Activated CD4-positive, alpha-beta memory T cell treated with anti-CD3 and anti-CD28 coated beads, Interleukin-2, amount 10 ng/mL, durations not matched to agents 7 days and 5 days (primary cell): ENCODE measurements at regions of chr10 and their contacts with region 1.

Region 1: GRCh38 chr10:1048732-1049424 is at the start of gene IDI1:
- DNase-seq: peak; percentile 98
- H3K4me3 Mint-ChIP-seq: peak within 1 kb of the TSS; percentile 95
- H3K27ac Mint-ChIP-seq: peak within 1 kb of the TSS; percentile 94
- H3K4me1 Mint-ChIP-seq: peaks cover 69% of the 10 kb centered on the region
- H3K27me3 Mint-ChIP-seq: no peaks in the 10 kb centered on the region
- total RNA-seq, gene IDI1: 96.0 to 96.5 TPM

Region 2: DNA sequence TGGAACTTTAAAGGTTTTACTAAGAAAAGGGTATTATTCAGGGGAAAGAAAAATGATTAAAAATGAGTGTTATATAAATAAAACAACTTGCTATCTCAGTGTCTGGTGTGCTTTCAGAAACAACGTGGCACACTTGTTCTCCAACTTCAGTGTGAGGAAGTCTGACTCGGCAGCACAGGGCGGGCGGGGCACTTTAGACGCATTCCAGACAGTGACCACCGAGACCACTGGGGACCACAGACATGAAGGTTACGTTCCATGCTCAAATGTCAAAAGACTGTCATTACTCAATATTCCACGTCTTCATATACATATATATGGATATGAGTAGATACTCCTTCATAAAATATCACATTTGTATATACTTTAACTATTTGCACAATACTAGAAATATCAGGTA is 204.3 kb before region 1 on chr10:
- CTCF ChIA-PET with region 1: no interaction called
- POLR2A ChIA-PET with region 1: no interaction called
- DNase-seq: no peak
- H3K4me3 Mint-ChIP-seq: no peak overlapping the region
- H3K27ac Mint-ChIP-seq: no peak overlapping the region
- H3K4me1 Mint-ChIP-seq: peaks cover 35% of the 10 kb centered on the region
- H3K27me3 Mint-ChIP-seq: no peaks in the 10 kb centered on the region

Region 3: GRCh38 chr10:905503-905902 is 143.4 kb before region 1 on chr10:
- CTCF ChIA-PET with region 1: no interaction called
- POLR2A ChIA-PET with region 1: no interaction called
- DNase-seq: no peak
- H3K4me3 Mint-ChIP-seq: no peak overlapping the region
- H3K27ac Mint-ChIP-seq: no peak overlapping the region
- H3K4me1 Mint-ChIP-seq: peaks cover 23% of the 10 kb centered on the region
- H3K27me3 Mint-ChIP-seq: no peaks in the 10 kb centered on the region

Region 4: GRCh38 chr10:987870-988666 is 60.8 kb before region 1 on chr10 and contains the start of gene GTPBP4:
- CTCF ChIA-PET with region 1: interaction called, 5 read pairs
- POLR2A ChIA-PET with region 1: interaction called, 26 read pairs
- DNase-seq: peak; percentile 97
- H3K4me3 Mint-ChIP-seq: peak within 1 kb of the TSS; percentile 98
- H3K27ac Mint-ChIP-seq: peak within 1 kb of the TSS; percentile 85
- H3K4me1 Mint-ChIP-seq: peaks cover 39% of the 10 kb centered on the region
- H3K27me3 Mint-ChIP-seq: no peaks in the 10 kb centered on the region
- total RNA-seq, gene GTPBP4: 50.9 to 59.6 TPM

Region 5: DNA sequence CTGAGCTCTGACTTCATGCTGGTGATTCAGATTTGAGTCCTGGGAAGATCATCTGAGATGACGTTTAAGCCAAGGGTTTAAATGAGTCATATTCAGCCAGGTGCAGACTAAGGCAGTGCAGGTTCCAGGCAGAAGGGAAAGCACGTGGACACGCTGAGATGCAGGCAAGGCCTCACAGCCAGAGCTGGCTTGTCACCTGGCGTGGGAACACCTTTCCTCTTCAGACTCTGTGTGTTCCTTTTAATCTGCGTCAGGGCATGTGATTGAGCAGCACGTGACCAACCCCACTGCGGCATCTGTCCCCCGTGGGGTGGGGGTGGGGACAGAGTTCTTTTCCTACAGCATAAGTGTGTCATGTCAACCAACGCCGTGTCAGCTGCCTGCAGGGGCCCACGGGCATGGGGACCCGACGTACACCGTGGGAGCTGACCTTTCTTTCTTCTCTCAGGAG is 12.5 kb before region 1 on chr10:
- CTCF ChIA-PET with region 1: interaction called, 5 read pairs
- POLR2A ChIA-PET with region 1: interaction called, 21 read pairs
- DNase-seq: peak; percentile 35
- H3K4me3 Mint-ChIP-seq: no peak overlapping the region
- H3K27ac Mint-ChIP-seq: no peak overlapping the region
- H3K4me1 Mint-ChIP-seq: peaks cover 33% of the 10 kb centered on the region
- H3K27me3 Mint-ChIP-seq: no peaks in the 10 kb centered on the region

Region 6: DNA sequence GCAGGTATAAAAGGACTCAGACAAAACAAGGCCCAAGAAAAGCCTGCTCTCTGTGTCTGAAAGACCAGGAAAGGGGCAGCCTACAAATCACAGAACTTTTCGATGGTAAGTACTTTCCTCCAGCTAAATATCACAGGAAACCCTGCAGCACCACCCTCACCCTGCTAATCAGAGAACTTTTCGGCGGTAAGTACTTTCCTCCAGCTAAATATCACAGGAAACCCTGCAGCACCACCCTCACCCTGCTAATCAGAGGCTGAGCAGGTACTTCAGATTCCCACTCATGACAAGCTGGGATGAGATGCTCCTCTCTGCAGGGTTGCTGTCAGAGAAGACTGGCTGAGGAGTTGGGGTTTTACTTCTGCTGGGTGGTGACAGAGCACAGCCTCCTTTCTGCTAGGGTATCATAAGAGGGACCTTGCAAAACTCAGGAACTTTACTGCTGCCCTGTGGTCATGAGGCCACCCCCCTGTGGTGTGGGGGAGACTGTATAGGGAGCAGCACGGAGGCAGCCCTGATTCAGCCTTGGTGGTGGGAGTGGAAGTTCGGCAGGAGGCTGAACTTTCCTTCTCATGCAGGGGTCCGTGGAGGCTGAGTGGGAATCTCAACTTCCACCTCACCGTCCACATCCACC is 14.5 kb after region 1 on chr10:
- CTCF ChIA-PET with region 1: interaction called, 7 read pairs
- POLR2A ChIA-PET with region 1: interaction called, 67 read pairs
- DNase-seq: peak; percentile 37
- H3K4me3 Mint-ChIP-seq: peak overlapping the region; percentile 31
- H3K27ac Mint-ChIP-seq: peak overlapping the region; percentile 88
- H3K4me1 Mint-ChIP-seq: peaks cover 80% of the 10 kb centered on the region
- H3K27me3 Mint-ChIP-seq: no peaks in the 10 kb centered on the region

Region 7: GRCh38 chr10:1142596-1142995 is 93.7 kb after region 1 on chr10:
- CTCF ChIA-PET with region 1: no interaction called
- POLR2A ChIA-PET with region 1: no interaction called
- DNase-seq: peak; percentile 30
- H3K4me3 Mint-ChIP-seq: no peak overlapping the region
- H3K27ac Mint-ChIP-seq: no peak overlapping the region
- H3K4me1 Mint-ChIP-seq: no peaks in the 10 kb centered on the region
- H3K27me3 Mint-ChIP-seq: peaks cover 46% of the 10 kb centered on the region